CD8-positive, alpha-beta T cell (primary cell): ENCODE measurements at regions of chr22 and their contacts with region 1.

Region 1: DNA sequence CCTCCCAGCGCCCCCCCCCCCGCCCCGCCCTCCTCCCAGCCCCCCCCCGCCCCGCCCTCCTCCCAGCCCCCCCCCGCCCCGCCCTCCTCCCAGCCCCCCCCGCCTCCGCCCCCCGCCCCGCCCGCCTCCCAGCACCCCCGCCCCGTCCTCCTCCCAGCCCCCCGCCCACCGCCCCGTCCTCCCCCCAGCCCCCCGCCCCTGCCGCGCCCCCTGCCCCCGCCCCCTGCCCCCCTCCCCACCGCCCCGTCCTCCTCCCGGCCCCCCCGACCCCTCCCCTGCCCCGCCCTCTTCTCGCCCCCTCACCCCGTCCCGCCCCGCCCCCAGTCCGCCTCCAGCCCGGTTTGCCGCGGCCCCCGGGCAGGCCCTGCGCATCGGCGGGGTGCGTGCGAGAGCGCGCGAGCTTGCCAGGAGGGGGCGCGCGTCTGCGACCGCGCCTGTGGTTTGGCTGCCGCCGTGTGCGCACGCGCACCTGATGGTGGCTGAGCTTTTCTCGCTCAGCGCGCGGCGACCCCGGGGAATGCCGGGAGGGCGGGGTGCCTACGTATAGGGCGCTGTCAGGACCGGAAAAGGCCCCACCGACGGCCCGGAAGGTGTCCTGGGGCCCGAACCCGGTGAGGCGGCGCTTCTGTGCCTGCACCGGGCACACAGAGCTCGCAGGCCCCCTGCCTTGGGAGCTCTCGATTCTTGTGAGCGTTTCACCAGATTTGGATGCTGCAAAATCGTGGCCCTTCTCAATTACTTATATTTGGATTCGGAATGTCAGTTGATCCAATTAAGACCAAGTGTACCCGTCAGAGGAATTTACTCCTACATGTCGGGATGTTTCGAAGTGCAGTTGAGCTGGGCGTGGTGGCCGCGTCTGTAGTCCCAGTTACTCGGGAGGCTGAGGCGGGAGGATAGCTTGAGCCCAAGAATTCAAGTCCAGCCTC is 501 bp upstream of the TTLL12 start:
- DNase-seq: peak; percentile 89 to 99 (median 97)
- ATAC-seq: peak; percentile 84
- H3K4me3 ChIP-seq: peak overlapping the region; percentile 46
- H3K4me3 Mint-ChIP-seq: peak overlapping the region; percentile 79
- H3K27ac ChIP-seq: peak overlapping the region; percentile 84 to 90
- H3K27ac Mint-ChIP-seq: peak overlapping the region; percentile 98
- H3K4me1 ChIP-seq: peaks cover 16% of the 10 kb centered on the region
- H3K4me1 Mint-ChIP-seq: peaks cover 21% of the 10 kb centered on the region
- H3K27me3 ChIP-seq: no peaks in the 10 kb centered on the region
- H3K27me3 Mint-ChIP-seq: no peaks in the 10 kb centered on the region
- CTCF ChIP-seq: peak; percentile 23

Region 2: DNA sequence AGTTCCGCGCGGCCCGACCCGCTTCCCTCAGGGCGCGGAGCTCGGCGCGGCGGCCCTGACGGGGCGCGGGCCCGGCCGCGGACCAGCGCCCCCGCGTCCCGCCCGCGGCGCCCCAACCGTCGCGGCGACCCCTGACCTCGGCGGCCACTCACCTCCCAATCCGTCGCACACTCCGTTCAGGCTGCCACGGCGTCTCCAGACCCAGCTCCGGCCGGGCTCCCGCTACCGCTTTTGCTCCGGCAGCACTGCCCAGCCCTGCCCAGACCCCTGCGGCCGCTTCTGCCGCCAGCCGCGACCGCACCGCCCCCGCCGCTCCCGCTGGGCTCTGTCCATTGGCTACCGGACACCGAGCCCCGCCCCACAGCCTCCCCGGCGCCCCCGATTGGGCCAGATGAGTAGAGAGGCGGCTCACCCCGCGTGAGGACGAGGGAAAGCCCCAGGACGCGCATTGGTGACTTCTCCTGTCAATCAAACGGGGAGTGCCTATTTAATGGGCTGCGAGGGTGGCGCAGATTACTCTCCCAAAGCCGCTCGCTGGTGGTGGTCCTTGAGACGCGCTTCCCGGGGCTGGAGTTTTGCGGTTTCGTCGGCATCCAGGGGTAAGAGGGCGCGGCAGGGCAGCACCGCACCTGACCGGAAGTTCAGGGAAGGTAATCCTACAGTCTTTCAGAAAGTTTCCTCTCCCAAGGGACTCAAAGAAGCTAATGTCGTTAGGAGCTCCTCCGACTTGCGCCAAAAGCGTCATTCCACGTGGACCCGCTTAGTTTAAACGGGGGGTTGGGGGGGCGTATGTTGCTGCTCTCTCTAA is 172.4 kb before region 1 on chr22 and contains the start of gene PACSIN2:
- CTCF ChIA-PET with region 1: no interaction called
- POLR2A ChIA-PET with region 1: no interaction called
- intact Hi-C with region 1: loop called in 1 of 2 experiments (anchors 1 kb)
- DNase-seq: peak; percentile 98 to 99 (median 98)
- ATAC-seq: peak; percentile 98
- H3K4me3 ChIP-seq: peak within 1 kb of the TSS; percentile 79 to 85
- H3K4me3 Mint-ChIP-seq: peak within 1 kb of the TSS; percentile 98
- H3K27ac ChIP-seq: peak within 1 kb of the TSS; percentile 73 to 76
- H3K27ac Mint-ChIP-seq: peak within 1 kb of the TSS; percentile 97
- H3K4me1 ChIP-seq: peaks cover 14% of the 10 kb centered on the region
- H3K4me1 Mint-ChIP-seq: peaks cover 33% of the 10 kb centered on the region
- H3K27me3 ChIP-seq: no peaks in the 10 kb centered on the region
- H3K27me3 Mint-ChIP-seq: no peaks in the 10 kb centered on the region
- CTCF ChIP-seq: no peak
- total RNA-seq, gene PACSIN2: 16.8 to 18.5 TPM

Region 3: GRCh38 chr22:43110444-43110926 is 77.0 kb before region 1 on chr22 and contains the start of gene BIK:
- CTCF ChIA-PET with region 1: no interaction called
- POLR2A ChIA-PET with region 1: interaction called, 3 read pairs
- intact Hi-C with region 1: loop called (anchors 2 kb)
- DNase-seq: peak in 8 of 9 experiments; percentile 31 to 69 (median 52)
- ATAC-seq: peak; percentile 49
- H3K4me3 ChIP-seq: peak within 1 kb of the TSS; percentile 51 to 82
- H3K4me3 Mint-ChIP-seq: peak within 1 kb of the TSS; percentile 87
- H3K27ac ChIP-seq: peak within 1 kb of the TSS in 1 of 2 experiments; percentile 20
- H3K27ac Mint-ChIP-seq: no peak within 1 kb of the TSS
- H3K4me1 ChIP-seq: peaks cover 7% of the 10 kb centered on the region
- H3K4me1 Mint-ChIP-seq: peaks cover 10% of the 10 kb centered on the region
- H3K27me3 ChIP-seq: no peaks in the 10 kb centered on the region
- H3K27me3 Mint-ChIP-seq: no peaks in the 10 kb centered on the region
- CTCF ChIP-seq: peak; percentile 12
- total RNA-seq, gene BIK: 5.3 to 6.1 TPM

Region 4: DNA sequence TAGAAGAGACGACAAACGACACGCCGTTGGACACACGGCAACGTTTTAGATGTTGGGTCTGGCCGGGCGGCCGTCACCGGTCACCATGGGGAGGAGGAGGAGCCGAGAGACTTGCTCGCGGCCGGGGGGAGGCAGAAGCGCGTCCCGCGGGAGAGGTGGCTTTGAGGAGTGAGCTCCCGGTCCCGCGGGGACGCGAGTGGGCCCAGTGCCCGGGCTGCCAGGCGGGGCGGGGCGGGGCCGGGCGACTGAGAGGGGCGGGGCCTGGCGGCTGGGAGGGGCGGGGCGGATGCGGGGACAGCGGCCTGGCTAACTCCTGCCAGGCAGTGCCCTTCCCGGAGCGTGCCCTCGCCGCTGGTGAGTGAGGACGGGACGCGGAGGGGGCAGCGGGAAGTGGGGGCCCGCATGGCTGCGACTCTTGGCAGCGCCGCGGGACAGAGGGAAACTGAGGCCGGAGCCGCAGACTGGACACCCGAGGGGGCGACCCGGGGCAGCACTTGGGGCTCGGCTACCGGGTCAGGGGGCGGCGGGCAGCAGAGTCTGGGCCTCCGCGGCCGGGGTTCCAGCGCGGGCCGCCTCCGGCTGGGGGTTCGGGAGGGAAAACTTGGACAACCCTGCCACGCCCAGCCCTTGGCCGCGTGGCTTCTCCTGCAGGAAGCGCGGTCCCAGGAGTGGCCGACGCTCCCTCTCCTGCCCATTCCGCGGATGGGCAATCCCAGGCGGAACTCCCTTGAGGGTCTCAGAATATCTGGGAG is 36.0 kb before region 1 on chr22 and contains the start of gene TSPO:
- CTCF ChIA-PET with region 1: no interaction called
- POLR2A ChIA-PET with region 1: interaction called, 6 read pairs
- intact Hi-C with region 1: loop called (anchors 2 kb)
- DNase-seq: peak; percentile 29 to 77 (median 57)
- ATAC-seq: peak; percentile 60
- H3K4me3 ChIP-seq: peak within 1 kb of the TSS; percentile 73 to 84
- H3K4me3 Mint-ChIP-seq: peak within 1 kb of the TSS; percentile 91
- H3K27ac ChIP-seq: peak within 1 kb of the TSS; percentile 56 to 62
- H3K27ac Mint-ChIP-seq: peak within 1 kb of the TSS; percentile 90
- H3K4me1 ChIP-seq: peaks cover 12% of the 10 kb centered on the region
- H3K4me1 Mint-ChIP-seq: peaks cover 25% of the 10 kb centered on the region
- H3K27me3 ChIP-seq: no peaks in the 10 kb centered on the region
- H3K27me3 Mint-ChIP-seq: no peaks in the 10 kb centered on the region
- CTCF ChIP-seq: no peak
- total RNA-seq, gene TSPO: 22.5 to 24.7 TPM

Region 5: GRCh38 chr22:43239193-43239780 is 51.9 kb after region 1 on chr22:
- CTCF ChIA-PET with region 1: no interaction called
- POLR2A ChIA-PET with region 1: no interaction called
- intact Hi-C with region 1: no loop called
- DNase-seq: no peak
- ATAC-seq: no peak
- H3K4me3 ChIP-seq: no peak overlapping the region
- H3K4me3 Mint-ChIP-seq: no peak overlapping the region
- H3K27ac ChIP-seq: no peak overlapping the region
- H3K27ac Mint-ChIP-seq: no peak overlapping the region
- H3K4me1 ChIP-seq: no peaks in the 10 kb centered on the region
- H3K4me1 Mint-ChIP-seq: no peaks in the 10 kb centered on the region
- H3K27me3 ChIP-seq: no peaks in the 10 kb centered on the region
- H3K27me3 Mint-ChIP-seq: no peaks in the 10 kb centered on the region
- CTCF ChIP-seq: no peak

Region 6: GRCh38 chr22:43308060-43308830 is 120.8 kb after region 1 on chr22:
- CTCF ChIA-PET with region 1: no interaction called
- POLR2A ChIA-PET with region 1: no interaction called
- intact Hi-C with region 1: no loop called
- DNase-seq: no peak
- ATAC-seq: no peak
- H3K4me3 ChIP-seq: no peak overlapping the region
- H3K4me3 Mint-ChIP-seq: no peak overlapping the region
- H3K27ac ChIP-seq: no peak overlapping the region
- H3K27ac Mint-ChIP-seq: no peak overlapping the region
- H3K4me1 ChIP-seq: no peaks in the 10 kb centered on the region
- H3K4me1 Mint-ChIP-seq: no peaks in the 10 kb centered on the region
- H3K27me3 ChIP-seq: no peaks in the 10 kb centered on the region
- H3K27me3 Mint-ChIP-seq: peaks cover 5% of the 10 kb centered on the region
- CTCF ChIP-seq: no peak

Region 7: DNA sequence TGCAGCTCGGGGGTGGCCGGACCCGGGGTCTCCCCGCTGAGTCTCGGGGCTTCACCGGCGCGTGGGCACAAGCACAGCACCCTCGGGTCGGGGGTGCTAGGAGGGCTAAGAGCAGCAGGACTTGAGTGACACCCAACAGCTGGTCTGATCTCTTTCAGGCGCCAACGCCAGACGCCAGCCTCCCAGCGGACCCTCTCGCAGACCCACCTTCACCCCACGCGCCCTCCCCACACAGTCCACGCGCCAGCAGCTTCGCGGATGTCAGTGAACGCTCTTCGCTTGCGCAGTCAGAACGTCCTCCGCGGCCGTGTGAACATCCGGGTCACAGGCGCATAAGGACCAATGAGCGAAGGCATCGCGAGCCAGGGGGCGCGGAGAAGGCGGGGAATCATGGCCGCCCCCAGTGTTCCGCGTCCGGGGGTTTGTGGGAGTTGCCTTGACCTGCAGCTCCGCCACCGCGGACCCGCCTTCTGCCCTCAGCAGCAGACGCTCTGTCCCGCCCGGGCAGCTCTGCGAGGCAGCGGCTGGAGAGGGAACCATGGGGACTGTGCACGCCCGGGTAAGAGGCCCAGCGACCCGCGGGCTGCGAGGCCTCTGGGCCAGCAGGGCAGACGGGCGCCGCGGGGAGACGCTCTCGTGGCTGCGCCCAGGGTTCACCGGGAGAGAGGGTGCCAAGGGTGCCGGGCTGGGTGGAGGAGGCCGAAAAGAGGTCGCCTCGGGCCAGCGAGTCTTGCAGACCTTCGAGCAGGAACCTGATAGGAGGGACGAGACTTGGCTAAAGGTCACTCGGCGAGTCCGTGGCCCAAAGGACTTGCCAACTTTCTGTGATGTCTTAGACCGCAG is 767.8 kb after region 1 on chr22 and contains the start of gene SAMM50:
- CTCF ChIA-PET with region 1: no interaction called
- POLR2A ChIA-PET with region 1: no interaction called
- intact Hi-C with region 1: loop called in 1 of 2 experiments (anchors 5 kb)
- DNase-seq: peak; percentile 82 to 95 (median 92)
- ATAC-seq: peak; percentile 98
- H3K4me3 ChIP-seq: peak within 1 kb of the TSS; percentile 86 to 91
- H3K4me3 Mint-ChIP-seq: peak within 1 kb of the TSS; percentile 97
- H3K27ac ChIP-seq: peak within 1 kb of the TSS; percentile 83 to 89
- H3K27ac Mint-ChIP-seq: peak within 1 kb of the TSS; percentile 93
- H3K4me1 ChIP-seq: peaks cover 22% of the 10 kb centered on the region
- H3K4me1 Mint-ChIP-seq: peaks cover 44% of the 10 kb centered on the region
- H3K27me3 ChIP-seq: no peaks in the 10 kb centered on the region
- H3K27me3 Mint-ChIP-seq: peaks cover 10% of the 10 kb centered on the region
- CTCF ChIP-seq: no peak
- total RNA-seq, gene SAMM50: 20.7 to 24.9 TPM

Region 8: GRCh38 chr22:44538051-44538450 is 1350.6 kb after region 1 on chr22:
- CTCF ChIA-PET with region 1: no interaction called
- POLR2A ChIA-PET with region 1: no interaction called
- intact Hi-C with region 1: no loop called
- DNase-seq: no peak
- ATAC-seq: no peak
- H3K4me3 ChIP-seq: no peak overlapping the region
- H3K4me3 Mint-ChIP-seq: no peak overlapping the region
- H3K27ac ChIP-seq: no peak overlapping the region
- H3K27ac Mint-ChIP-seq: no peak overlapping the region
- H3K4me1 ChIP-seq: no peaks in the 10 kb centered on the region
- H3K4me1 Mint-ChIP-seq: peaks cover 1% of the 10 kb centered on the region
- H3K27me3 ChIP-seq: no peaks in the 10 kb centered on the region
- H3K27me3 Mint-ChIP-seq: peaks cover 24% of the 10 kb centered on the region
- CTCF ChIP-seq: no peak

Region 9: DNA sequence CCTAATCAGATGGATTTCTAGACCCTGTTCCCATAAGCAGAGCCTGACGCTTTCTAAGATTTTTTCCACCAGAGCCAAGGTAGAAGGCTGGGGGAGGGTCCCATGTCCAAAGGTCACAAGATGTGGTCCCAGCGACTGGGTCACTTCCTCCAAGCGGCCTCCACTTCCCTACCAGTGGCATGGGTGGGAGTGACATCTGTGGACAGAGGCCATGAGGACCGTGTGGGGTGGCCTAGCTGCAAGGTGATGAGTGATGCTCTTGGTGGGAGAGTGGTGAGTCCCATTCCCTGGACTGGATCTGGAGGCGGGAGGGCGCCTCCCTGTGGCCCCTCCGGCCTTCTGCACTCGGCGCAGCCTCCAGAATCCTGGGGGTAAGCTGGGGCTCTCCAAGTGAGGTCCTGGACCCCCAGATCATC is 1482.1 kb after region 1 on chr22:
- CTCF ChIA-PET with region 1: no interaction called
- POLR2A ChIA-PET with region 1: no interaction called
- intact Hi-C with region 1: loop called in 1 of 2 experiments (anchors 5 kb)
- DNase-seq: peak in 2 of 9 experiments; percentile 40 to 57
- ATAC-seq: no peak
- H3K4me3 ChIP-seq: peak overlapping the region; percentile 60 to 69
- H3K4me3 Mint-ChIP-seq: peak overlapping the region; percentile 78
- H3K27ac ChIP-seq: no peak overlapping the region
- H3K27ac Mint-ChIP-seq: peak overlapping the region; percentile 73
- H3K4me1 ChIP-seq: peaks cover 63% of the 10 kb centered on the region
- H3K4me1 Mint-ChIP-seq: peaks cover 67% of the 10 kb centered on the region
- H3K27me3 ChIP-seq: no peaks in the 10 kb centered on the region
- H3K27me3 Mint-ChIP-seq: no peaks in the 10 kb centered on the region
- CTCF ChIP-seq: peak; percentile 13